Activated naive CD4-positive, alpha-beta T cell treated with anti-CD3 and anti-CD28 coated beads for 36 hours (primary cell): ENCODE measurements at regions of chr13 and their contacts with region 1.

Region 1: DNA sequence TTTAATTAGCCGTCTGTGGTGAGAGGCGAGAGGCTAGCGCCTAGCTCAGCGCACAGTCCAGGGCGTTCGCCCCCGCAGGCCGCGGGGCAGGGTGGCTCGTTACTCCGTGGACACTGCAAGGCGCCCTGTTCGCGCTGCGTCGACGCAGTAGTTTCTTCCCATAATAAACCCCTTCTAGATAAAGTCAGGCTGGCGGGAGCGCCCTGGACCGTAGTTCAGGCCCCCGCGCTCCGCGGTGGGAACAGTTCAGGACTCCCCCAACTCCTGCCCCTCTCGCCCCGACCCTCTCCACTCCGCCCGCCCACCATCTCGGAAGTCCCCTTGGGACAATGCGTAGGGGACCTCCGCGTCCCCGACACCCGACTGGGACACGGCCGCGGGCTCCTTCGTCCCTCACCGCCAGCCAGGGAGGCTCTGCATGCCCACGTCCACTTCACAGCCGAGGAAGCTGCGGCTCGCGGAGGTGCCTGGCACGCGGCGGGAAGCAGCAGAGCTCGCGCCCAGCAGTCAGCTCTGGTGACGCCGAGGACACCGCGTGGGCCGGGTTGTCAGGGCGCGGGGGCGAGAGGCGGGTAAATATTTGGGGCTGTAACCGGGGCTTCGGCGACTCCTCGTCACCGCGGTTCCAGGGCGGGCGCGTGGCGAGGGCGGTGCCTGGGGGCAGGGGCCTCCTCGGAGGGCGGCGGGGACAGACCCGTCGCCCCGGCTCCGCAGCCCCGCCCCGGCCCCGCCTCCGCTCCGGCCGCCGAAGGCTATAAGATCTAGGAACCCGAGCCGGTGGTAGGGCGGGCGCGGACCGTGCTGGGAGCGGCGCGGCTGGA is at the start of gene RGCC:
- DNase-seq: peak; percentile 94
- H3K4me3 Mint-ChIP-seq: peak within 1 kb of the TSS; percentile 85
- H3K27ac Mint-ChIP-seq: peak within 1 kb of the TSS; percentile 96
- H3K4me1 Mint-ChIP-seq: peaks cover 26% of the 10 kb centered on the region
- H3K27me3 Mint-ChIP-seq: peaks cover 8% of the 10 kb centered on the region
- total RNA-seq, gene RGCC: 75.0 to 77.8 TPM

Region 2: DNA sequence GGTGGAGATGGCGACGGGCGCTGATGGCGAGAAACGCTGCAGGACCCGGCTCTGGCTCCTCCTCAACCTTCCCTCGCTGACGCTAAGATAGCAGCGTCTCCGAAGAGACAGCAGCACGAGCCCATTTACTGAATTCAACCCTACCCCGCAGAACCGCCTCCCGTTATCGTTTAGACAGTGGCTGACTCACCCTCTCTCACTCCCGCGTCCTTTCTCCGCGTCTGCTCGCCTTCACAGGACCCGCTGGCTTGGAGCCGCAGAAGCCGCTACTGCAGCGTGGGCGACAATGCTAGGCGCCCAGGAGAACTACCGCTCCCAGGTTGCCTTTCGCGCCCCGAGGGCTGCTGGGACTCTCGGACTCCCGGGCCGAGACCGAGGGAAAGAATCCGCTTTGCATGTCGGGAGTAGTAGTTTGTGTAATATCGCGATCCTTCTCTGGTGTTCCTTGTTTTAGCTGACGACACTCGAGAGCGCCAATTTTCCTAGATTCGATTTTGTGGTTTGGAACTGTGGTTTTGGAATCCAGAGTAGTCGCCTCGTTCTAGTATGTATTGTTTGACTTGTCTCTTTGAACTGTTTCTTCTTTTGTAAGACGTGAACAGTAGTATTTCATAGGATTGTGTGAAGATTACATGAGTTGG is 324.3 kb before region 1 on chr13 and contains the start of gene KBTBD6:
- CTCF ChIA-PET with region 1: no interaction called
- intact Hi-C with region 1: loop called (anchors 1 kb)
- DNase-seq: peak; percentile 98
- H3K4me3 Mint-ChIP-seq: peak within 1 kb of the TSS; percentile 92
- H3K27ac Mint-ChIP-seq: peak within 1 kb of the TSS; percentile 87
- H3K4me1 Mint-ChIP-seq: peaks cover 35% of the 10 kb centered on the region
- H3K27me3 Mint-ChIP-seq: no peaks in the 10 kb centered on the region
- total RNA-seq, gene KBTBD6: 3.9 to 4.0 TPM

Region 3: DNA sequence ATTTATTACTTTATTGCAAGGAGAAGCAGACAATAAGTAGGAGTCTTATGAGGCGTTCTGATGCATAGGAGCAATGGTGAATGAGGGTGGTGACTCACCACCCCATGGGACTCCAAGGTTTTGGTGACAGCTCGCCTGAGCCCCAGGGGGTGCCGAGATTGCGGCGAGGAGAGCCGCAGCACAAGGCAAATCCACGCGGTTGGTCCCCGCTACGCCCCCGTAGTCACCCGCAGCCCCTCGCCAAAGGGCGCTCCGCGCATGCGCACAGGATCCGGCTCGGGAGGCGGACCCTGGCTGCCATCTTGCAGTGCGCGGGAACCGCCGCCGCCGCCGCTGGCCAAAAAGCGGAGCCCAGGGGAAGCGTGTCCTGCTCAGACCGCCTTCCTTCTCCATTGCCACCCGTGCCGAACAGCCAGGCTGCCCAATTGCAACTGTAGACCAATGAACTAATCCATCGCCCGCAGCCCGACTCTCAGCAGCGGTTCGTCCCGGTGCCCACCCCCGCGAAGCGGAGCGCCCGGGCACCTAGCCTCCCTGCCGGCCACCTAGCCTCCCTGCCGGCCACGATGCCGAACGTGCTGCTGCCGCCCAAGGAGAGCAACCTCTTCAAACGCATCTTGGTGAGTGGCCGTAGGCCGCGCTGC is 145.9 kb before region 1 on chr13 and contains the start of gene NAA16:
- CTCF ChIA-PET with region 1: no interaction called
- intact Hi-C with region 1: loop called (anchors 1 kb)
- DNase-seq: peak; percentile 96
- H3K4me3 Mint-ChIP-seq: peak within 1 kb of the TSS; percentile 94
- H3K27ac Mint-ChIP-seq: peak within 1 kb of the TSS; percentile 95
- H3K4me1 Mint-ChIP-seq: peaks cover 31% of the 10 kb centered on the region
- H3K27me3 Mint-ChIP-seq: no peaks in the 10 kb centered on the region
- total RNA-seq, gene NAA16: 29.6 to 31.5 TPM

Region 4: DNA sequence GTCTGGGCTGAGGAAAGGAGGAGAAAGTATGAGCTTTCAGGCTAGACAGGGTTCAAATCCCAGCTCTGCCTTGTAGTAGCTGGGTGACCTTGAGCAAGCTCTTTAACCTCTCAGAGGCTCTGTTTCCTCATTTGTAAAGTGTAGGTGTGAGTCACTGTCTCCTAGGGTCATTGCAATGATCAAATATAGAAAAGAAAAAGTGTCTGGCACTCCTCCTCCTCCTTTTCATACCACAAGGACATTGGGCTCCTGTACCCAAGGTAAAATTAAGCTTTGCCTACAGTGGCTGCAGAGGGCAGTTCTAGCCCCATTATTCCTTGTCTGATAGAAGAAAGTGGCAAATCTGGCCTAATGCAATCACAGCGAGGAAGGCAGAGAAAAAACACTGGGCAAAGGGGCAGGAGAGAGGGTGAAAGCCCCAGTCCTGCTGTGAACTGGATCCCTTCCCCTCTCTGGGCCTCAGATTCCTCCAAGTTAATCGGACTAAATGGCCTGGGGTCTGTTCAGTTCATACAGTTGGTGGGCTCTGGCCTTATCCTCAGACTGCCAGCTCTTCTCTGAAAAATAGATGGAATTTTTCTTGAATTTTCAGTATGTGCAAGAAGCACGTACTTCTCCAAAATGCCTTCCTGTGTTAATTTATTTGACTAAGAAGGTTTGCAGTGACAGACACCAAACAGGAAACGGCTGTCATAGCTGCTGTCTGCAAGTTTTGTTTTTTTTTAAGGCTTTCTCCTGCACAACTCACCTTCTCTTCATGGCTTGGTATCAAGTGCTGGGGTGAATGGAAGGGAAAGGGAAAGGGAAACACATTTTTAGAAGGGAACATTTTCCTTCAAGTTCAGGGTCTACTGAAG is 35.7 kb after region 1 on chr13:
- CTCF ChIA-PET with region 1: interaction called, 67 read pairs
- intact Hi-C with region 1: no loop called
- DNase-seq: peak; percentile 62
- H3K4me3 Mint-ChIP-seq: peak overlapping the region; percentile 45
- H3K27ac Mint-ChIP-seq: peak overlapping the region; percentile 95
- H3K4me1 Mint-ChIP-seq: peaks cover 91% of the 10 kb centered on the region
- H3K27me3 Mint-ChIP-seq: no peaks in the 10 kb centered on the region

Region 5: GRCh38 chr13:41509971-41510370 is 53.0 kb after region 1 on chr13:
- CTCF ChIA-PET with region 1: no interaction called
- intact Hi-C with region 1: no loop called
- DNase-seq: no peak
- H3K4me3 Mint-ChIP-seq: no peak overlapping the region
- H3K27ac Mint-ChIP-seq: no peak overlapping the region
- H3K4me1 Mint-ChIP-seq: peaks cover 11% of the 10 kb centered on the region
- H3K27me3 Mint-ChIP-seq: no peaks in the 10 kb centered on the region

Region 6: DNA sequence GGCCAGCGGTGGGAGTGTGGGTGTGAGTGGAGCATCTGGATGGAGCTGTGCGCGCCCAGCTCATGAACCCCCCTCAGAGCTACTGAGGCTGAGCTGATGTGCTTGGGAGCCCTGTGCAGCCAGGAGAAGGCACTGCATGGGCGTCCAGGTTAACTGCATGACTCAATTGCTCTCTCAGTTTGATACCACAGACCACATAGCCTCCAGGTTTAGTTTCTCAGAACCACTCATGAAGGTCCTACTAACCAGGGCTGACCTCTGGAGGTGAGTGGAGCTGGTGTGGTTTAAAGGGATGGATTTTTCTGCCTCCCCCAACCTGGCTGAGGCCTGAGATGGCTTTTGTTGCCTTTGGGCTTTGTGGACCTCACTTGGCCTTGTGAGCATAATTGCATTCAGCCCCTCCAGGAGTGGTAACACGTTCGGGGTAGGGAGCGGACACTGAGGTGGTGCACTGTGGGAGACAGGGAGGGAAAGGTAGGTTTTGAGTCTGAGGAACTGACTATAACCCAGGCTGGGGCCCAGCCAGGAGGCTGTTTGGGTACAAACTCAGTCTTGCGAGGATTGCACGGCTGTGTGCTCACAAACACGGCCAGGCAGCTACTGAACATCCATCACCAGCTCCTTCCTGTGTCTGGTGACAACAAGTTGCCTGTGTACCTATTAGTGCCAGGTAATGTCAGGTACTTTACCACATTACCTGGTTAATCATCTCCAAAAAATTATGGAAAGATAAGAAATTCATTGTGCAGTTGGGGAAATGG is 97.8 kb after region 1 on chr13:
- CTCF ChIA-PET with region 1: interaction called, 12 read pairs
- intact Hi-C with region 1: loop called (anchors 1 kb)
- DNase-seq: peak; percentile 41
- H3K4me3 Mint-ChIP-seq: no peak overlapping the region
- H3K27ac Mint-ChIP-seq: no peak overlapping the region
- H3K4me1 Mint-ChIP-seq: peaks cover 6% of the 10 kb centered on the region
- H3K27me3 Mint-ChIP-seq: no peaks in the 10 kb centered on the region

Region 7: DNA sequence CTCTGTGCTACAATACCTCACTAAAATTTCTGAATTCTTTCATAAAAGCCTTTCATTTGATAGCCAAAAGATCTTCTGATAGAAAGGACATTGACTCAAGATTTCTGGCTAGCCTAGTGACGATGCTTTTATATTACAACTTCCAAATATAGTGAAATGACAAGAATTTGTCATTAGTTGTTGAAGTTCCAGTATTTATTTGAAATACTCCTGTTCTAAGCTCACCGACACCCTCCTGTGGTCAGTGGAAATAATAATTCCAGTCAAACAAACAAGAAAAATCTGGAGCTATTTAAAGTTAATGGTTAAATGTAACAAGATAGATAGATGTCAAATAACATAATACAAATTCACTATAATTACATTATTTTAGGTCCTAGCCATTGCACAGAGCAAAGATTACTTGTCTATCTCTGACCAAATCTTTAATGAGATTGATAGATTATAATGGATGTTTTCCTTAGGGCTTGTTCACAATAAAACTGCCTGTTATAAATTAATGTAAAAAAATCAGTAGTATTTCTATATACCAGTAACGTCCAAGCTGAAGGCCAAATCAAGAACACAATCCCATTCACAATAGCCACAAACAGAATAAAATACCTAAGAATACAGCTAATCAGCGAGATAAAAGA is 195.9 kb after region 1 on chr13:
- CTCF ChIA-PET with region 1: interaction called, 33 read pairs
- intact Hi-C with region 1: loop called (anchors 1 kb)
- DNase-seq: peak; percentile 66
- H3K4me3 Mint-ChIP-seq: no peak overlapping the region
- H3K27ac Mint-ChIP-seq: no peak overlapping the region
- H3K4me1 Mint-ChIP-seq: peaks cover 22% of the 10 kb centered on the region
- H3K27me3 Mint-ChIP-seq: no peaks in the 10 kb centered on the region